ENCODE measurements at regions of chr6 and their contacts with region 1.

Region 1: GRCh38 chr6:150813319-150813992 is 52.0 kb upstream of the MTHFD1L start:
- DNase-seq: no peak
- ATAC-seq: no peak
- H3K4me3 ChIP-seq: no peak overlapping the region
- H3K4me3 Mint-ChIP-seq: no peak overlapping the region
- H3K27ac ChIP-seq: no peak overlapping the region
- H3K27ac Mint-ChIP-seq: peak overlapping the region in 1 of 9 donors; percentile 61
- H3K4me1 ChIP-seq: no peaks in the 10 kb centered on the region
- H3K4me1 Mint-ChIP-seq: peaks cover 0 to 5% (median 0%) of the 10 kb centered on the region in 7 donors
- H3K27me3 ChIP-seq: no peaks in the 10 kb centered on the region
- H3K27me3 Mint-ChIP-seq: peaks cover 7 to 50% (median 24%) of the 10 kb centered on the region in 5 donors

Region 2: DNA sequence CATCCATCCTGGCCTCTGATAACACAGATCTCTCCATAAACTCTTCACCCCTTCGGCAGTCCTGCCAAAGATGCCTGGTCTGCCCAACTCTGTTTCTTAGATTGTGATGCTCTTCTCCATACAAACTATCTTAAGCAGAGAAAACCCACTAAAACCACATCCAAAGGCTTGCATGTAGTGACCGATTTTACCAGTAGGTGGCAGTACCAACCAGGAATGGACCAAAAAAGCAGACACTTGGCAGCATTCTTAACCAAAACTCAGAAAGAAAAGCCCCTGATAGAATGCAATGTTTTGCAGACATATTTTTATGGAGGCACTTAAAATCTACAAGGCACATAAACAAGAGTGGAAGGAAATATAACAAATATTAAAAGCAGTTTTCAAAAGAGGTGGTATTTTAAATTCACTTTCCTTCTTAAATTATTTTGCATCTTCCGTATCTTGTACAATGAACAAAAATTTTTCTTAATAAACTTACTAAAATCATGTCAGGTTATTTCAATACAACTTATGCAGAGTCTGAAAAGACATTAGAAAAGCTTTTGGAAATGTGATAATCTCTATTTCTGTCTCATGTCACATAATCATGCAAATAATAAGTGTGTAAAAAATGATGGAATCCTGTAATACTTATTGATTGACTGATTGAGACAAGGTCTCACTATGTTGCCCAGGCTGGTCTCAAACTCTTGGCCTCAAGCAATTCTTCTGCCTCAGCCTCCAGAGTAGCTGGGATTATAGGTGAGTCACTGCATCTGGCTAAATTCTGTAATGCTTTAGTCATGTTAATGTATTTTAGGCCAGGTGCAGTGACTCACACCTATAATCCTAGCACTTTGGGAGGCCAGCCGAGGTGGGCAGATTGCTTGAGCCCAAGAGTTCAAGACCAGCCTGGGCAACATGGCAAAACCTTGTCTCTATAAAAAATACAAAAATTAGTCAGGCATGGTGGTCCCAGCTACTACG is 978.7 kb before region 1 on chr6:
- CTCF ChIA-PET with region 1: no interaction called
- POLR2A ChIA-PET with region 1: no interaction called
- intact Hi-C with region 1: loop called in 1 of 2 experiments (anchors 5 kb)
- DNase-seq: peak; percentile 50 to 85 (median 75)
- ATAC-seq: peak; percentile 92
- H3K4me3 ChIP-seq: no peak overlapping the region
- H3K4me3 Mint-ChIP-seq: no peak overlapping the region
- H3K27ac ChIP-seq: no peak overlapping the region
- H3K27ac Mint-ChIP-seq: no peak overlapping the region
- H3K4me1 ChIP-seq: no peaks in the 10 kb centered on the region
- H3K4me1 Mint-ChIP-seq: peaks cover 0 to 5% (median 4%) of the 10 kb centered on the region in 7 donors
- H3K27me3 ChIP-seq: no peaks in the 10 kb centered on the region
- H3K27me3 Mint-ChIP-seq: peaks cover 0 to 19% (median 4%) of the 10 kb centered on the region in 5 donors

Region 3: GRCh38 chr6:150079604-150080003 is 733.9 kb before region 1 on chr6:
- CTCF ChIA-PET with region 1: interaction called, 10 read pairs
- POLR2A ChIA-PET with region 1: no interaction called
- intact Hi-C with region 1: loop called (anchors 1 kb)
- DNase-seq: peak in 8 of 9 donors; percentile 16 to 59 (median 46)
- ATAC-seq: peak; percentile 59
- H3K4me3 ChIP-seq: no peak overlapping the region
- H3K4me3 Mint-ChIP-seq: peak overlapping the region in 9 of 10 donors; percentile 51 to 82 (median 71)
- H3K27ac ChIP-seq: no peak overlapping the region
- H3K27ac Mint-ChIP-seq: peak overlapping the region in 3 of 9 donors; percentile 18 to 83 (median 69)
- H3K4me1 ChIP-seq: peaks cover 7 to 16% of the 10 kb centered on the region in 2 donors
- H3K4me1 Mint-ChIP-seq: peaks cover 9 to 28% (median 23%) of the 10 kb centered on the region in 7 donors
- H3K27me3 ChIP-seq: no peaks in the 10 kb centered on the region
- H3K27me3 Mint-ChIP-seq: peaks cover 11 to 36% (median 17%) of the 10 kb centered on the region in 5 donors

Region 4: GRCh38 chr6:150685860-150686259 is 127.6 kb before region 1 on chr6:
- CTCF ChIA-PET with region 1: no interaction called
- POLR2A ChIA-PET with region 1: no interaction called
- intact Hi-C with region 1: loop called (anchors 1 kb)
- DNase-seq: peak in 3 of 9 donors; percentile 7 to 36 (median 20)
- ATAC-seq: peak; percentile 63
- H3K4me3 ChIP-seq: no peak overlapping the region
- H3K4me3 Mint-ChIP-seq: no peak overlapping the region
- H3K27ac ChIP-seq: no peak overlapping the region
- H3K27ac Mint-ChIP-seq: no peak overlapping the region
- H3K4me1 ChIP-seq: no peaks in the 10 kb centered on the region
- H3K4me1 Mint-ChIP-seq: no peaks in the 10 kb centered on the region
- H3K27me3 ChIP-seq: no peaks in the 10 kb centered on the region
- H3K27me3 Mint-ChIP-seq: peaks cover 0 to 12% (median 5%) of the 10 kb centered on the region in 5 donors

Region 5: GRCh38 chr6:150841697-150842096 is 28.2 kb after region 1 on chr6:
- CTCF ChIA-PET with region 1: no interaction called
- POLR2A ChIA-PET with region 1: no interaction called
- intact Hi-C with region 1: no loop called
- DNase-seq: no peak
- ATAC-seq: no peak
- H3K4me3 ChIP-seq: no peak overlapping the region
- H3K4me3 Mint-ChIP-seq: no peak overlapping the region
- H3K27ac ChIP-seq: no peak overlapping the region
- H3K27ac Mint-ChIP-seq: no peak overlapping the region
- H3K4me1 ChIP-seq: no peaks in the 10 kb centered on the region
- H3K4me1 Mint-ChIP-seq: no peaks in the 10 kb centered on the region
- H3K27me3 ChIP-seq: no peaks in the 10 kb centered on the region
- H3K27me3 Mint-ChIP-seq: peaks cover 0 to 23% (median 7%) of the 10 kb centered on the region in 5 donors

Region 6: GRCh38 chr6:151044465-151045441 is 231.3 kb after region 1 on chr6:
- CTCF ChIA-PET with region 1: no interaction called
- POLR2A ChIA-PET with region 1: no interaction called
- intact Hi-C with region 1: no loop called
- DNase-seq: no peak
- ATAC-seq: no peak
- H3K4me3 ChIP-seq: no peak overlapping the region
- H3K4me3 Mint-ChIP-seq: no peak overlapping the region
- H3K27ac ChIP-seq: no peak overlapping the region
- H3K27ac Mint-ChIP-seq: peak overlapping the region in 1 of 9 donors; percentile 33
- H3K4me1 ChIP-seq: no peaks in the 10 kb centered on the region
- H3K4me1 Mint-ChIP-seq: no peaks in the 10 kb centered on the region
- H3K27me3 ChIP-seq: no peaks in the 10 kb centered on the region
- H3K27me3 Mint-ChIP-seq: no peaks in the 10 kb centered on the region

Region 7: DNA sequence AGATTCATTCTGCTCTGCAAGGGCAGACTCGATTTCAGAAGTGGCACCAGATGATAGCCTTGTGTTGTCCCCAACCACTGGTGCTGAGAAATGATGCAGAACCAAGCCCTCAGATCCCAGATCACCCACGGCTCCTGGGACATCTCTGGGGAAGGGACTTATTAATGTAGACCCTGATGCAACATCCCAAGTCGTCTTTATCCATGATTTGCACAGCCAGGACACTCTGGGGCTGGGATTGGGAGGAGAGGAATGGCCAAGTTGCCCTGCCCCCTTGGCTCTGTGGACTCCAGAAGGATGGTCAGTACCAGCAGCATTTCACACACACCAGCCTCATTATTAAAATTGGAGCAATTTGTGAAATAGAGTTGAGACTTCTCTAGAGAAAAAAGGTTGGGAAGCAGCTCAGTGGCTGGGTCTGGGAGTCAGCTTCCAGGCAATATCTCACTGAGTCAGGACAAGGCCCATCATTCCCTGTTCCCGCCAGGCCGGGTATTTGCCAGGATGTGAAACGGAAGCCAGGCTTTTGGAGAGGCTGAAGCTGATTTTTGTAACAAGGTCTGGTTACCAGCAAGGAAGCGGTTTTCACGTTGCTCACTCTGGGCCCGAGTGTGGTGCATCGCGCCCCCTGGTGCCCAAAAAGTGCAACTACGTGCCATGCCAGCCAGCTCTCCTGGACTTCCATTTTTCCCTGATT is 510.5 kb after region 1 on chr6:
- CTCF ChIA-PET with region 1: no interaction called
- POLR2A ChIA-PET with region 1: no interaction called
- intact Hi-C with region 1: loop called (anchors 2 to 5 kb)
- DNase-seq: peak; percentile 46 to 76 (median 65)
- ATAC-seq: peak; percentile 85
- H3K4me3 ChIP-seq: no peak overlapping the region
- H3K4me3 Mint-ChIP-seq: peak overlapping the region; percentile 22 to 87 (median 79)
- H3K27ac ChIP-seq: no peak overlapping the region
- H3K27ac Mint-ChIP-seq: peak overlapping the region in 1 of 9 donors; percentile 7
- H3K4me1 ChIP-seq: peaks cover 11 to 12% of the 10 kb centered on the region in 2 donors
- H3K4me1 Mint-ChIP-seq: peaks cover 9 to 27% (median 23%) of the 10 kb centered on the region in 7 donors
- H3K27me3 ChIP-seq: peaks cover 0 to 7% of the 10 kb centered on the region in 2 donors
- H3K27me3 Mint-ChIP-seq: peaks cover 27 to 62% (median 54%) of the 10 kb centered on the region in 5 donors

Region 8: GRCh38 chr6:152508477-152508876 is 1695.0 kb after region 1 on chr6:
- CTCF ChIA-PET with region 1: no interaction called
- POLR2A ChIA-PET with region 1: no interaction called
- intact Hi-C with region 1: no loop called
- DNase-seq: no peak
- ATAC-seq: no peak
- H3K4me3 ChIP-seq: no peak overlapping the region
- H3K4me3 Mint-ChIP-seq: no peak overlapping the region
- H3K27ac ChIP-seq: no peak overlapping the region
- H3K27ac Mint-ChIP-seq: no peak overlapping the region
- H3K4me1 ChIP-seq: no peaks in the 10 kb centered on the region
- H3K4me1 Mint-ChIP-seq: no peaks in the 10 kb centered on the region
- H3K27me3 ChIP-seq: no peaks in the 10 kb centered on the region
- H3K27me3 Mint-ChIP-seq: peaks cover 0 to 18% (median 11%) of the 10 kb centered on the region in 5 donors